ENCODE measurements at regions of chr6 and their contacts with region 1.

Region 1: DNA sequence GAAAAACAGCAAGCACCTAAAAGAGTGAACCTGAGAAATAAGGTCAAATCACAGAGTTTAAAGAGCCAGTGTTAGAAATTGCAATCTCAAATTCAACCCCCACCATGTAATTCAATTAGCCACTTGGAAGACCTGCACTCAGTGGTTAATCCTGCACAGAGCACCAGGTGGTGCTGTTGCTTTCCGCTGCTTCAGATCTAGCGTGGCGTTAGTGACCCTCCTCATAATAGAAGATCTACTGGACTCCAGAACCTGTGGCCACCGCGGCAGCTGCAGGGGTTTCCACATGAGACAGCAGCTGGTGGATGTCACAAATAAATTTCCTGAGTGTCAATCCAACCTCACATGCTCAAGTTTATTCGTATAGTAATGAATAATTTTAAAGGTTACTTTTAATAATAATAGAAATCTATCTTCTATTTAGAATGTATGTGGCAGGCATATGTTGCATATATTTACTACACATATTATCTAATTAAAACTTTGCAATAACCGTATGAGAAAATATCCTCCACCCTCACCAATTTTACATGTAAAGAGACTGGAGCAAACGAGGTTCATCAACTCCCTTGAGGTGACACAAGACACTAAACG is 84.4 kb downstream of the SYNE1 start:
- DNase-seq: peak; percentile 68 to 73
- H3K4me3 ChIP-seq: no peak overlapping the region
- H3K4me3 Mint-ChIP-seq: no peak overlapping the region
- H3K27ac Mint-ChIP-seq: no peak overlapping the region
- H3K4me1 ChIP-seq: no peaks in the 10 kb centered on the region
- H3K4me1 Mint-ChIP-seq: no peaks in the 10 kb centered on the region
- H3K27me3 ChIP-seq: no peaks in the 10 kb centered on the region
- H3K27me3 Mint-ChIP-seq: peaks cover 2% of the 10 kb centered on the region
- CTCF ChIP-seq: peak; percentile 88 to 89

Region 2: DNA sequence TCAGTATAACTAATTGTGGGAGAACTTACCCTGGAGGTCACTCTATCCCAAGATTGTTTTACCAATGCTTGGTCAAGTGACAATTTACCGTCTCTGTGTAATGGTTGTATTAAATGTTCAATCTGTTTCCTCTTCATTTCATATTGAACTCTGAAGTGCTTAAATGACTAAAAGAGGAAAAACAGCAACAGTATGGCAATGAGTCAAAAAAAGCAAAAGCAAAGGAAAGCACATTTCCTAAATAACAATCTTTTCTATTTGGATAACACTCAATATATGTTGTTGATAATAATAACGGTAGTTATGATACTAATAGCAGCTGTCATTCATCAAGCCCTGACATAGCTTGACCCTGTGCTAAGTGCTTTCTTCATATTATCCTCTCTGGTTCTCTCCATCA is 67.9 kb before region 1 on chr6:
- CTCF ChIA-PET with region 1: no interaction called
- POLR2A ChIA-PET with region 1: no interaction called
- intact Hi-C with region 1: loop called (anchors 1 kb)
- DNase-seq: no peak
- H3K4me3 ChIP-seq: no peak overlapping the region
- H3K4me3 Mint-ChIP-seq: no peak overlapping the region
- H3K27ac Mint-ChIP-seq: no peak overlapping the region
- H3K4me1 ChIP-seq: no peaks in the 10 kb centered on the region
- H3K4me1 Mint-ChIP-seq: no peaks in the 10 kb centered on the region
- H3K27me3 ChIP-seq: no peaks in the 10 kb centered on the region
- H3K27me3 Mint-ChIP-seq: peaks cover 4% of the 10 kb centered on the region
- CTCF ChIP-seq: no peak

Region 3: DNA sequence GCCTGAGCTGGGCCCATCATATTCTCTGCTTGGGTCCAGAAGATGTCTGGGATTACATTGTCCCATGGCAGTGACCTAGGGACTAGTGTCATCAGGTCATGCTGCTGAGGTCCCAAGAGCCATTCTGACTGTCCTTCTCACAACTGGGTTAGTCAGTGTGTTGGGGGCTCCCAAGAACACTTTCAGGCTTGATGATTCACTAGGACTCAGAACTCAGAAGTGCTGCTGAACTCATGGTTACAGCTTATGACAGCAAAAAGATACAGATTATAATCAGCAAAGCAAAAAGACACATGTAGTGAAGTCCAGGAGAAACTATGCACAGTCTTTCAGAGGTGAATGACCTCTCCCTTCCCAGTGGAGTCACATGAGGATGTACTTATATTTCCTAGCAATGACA is 23.3 kb before region 1 on chr6:
- CTCF ChIA-PET with region 1: no interaction called
- POLR2A ChIA-PET with region 1: no interaction called
- intact Hi-C with region 1: no loop called
- DNase-seq: no peak
- H3K4me3 ChIP-seq: no peak overlapping the region
- H3K4me3 Mint-ChIP-seq: no peak overlapping the region
- H3K27ac Mint-ChIP-seq: no peak overlapping the region
- H3K4me1 ChIP-seq: no peaks in the 10 kb centered on the region
- H3K4me1 Mint-ChIP-seq: no peaks in the 10 kb centered on the region
- H3K27me3 ChIP-seq: no peaks in the 10 kb centered on the region
- H3K27me3 Mint-ChIP-seq: peaks cover 10% of the 10 kb centered on the region
- CTCF ChIP-seq: no peak

Region 4: GRCh38 chr6:152585236-152585635 is 32.5 kb after region 1 on chr6:
- CTCF ChIA-PET with region 1: no interaction called
- POLR2A ChIA-PET with region 1: no interaction called
- intact Hi-C with region 1: no loop called
- DNase-seq: no peak
- H3K4me3 ChIP-seq: no peak overlapping the region
- H3K4me3 Mint-ChIP-seq: no peak overlapping the region
- H3K27ac Mint-ChIP-seq: no peak overlapping the region
- H3K4me1 ChIP-seq: no peaks in the 10 kb centered on the region
- H3K4me1 Mint-ChIP-seq: no peaks in the 10 kb centered on the region
- H3K27me3 ChIP-seq: no peaks in the 10 kb centered on the region
- H3K27me3 Mint-ChIP-seq: no peaks in the 10 kb centered on the region
- CTCF ChIP-seq: no peak

Region 5: DNA sequence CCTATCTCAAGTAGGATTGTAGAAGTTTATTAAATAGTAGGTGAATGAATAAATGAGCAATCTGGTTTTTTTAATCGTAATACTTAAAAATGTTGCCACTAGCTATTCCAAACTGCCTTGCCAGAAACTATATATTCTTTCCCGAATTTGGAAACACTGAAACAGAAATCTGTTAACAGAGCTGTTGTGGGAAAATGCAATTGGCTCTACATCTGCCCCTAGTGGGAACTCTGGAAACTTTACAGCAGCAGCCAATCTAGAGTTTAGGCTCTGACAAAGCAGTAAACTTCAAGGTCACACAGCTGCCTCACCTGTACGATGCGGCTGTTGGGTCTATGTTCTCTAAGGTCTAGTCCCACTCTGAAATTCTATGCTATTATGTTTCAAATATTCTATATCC is 42.8 kb after region 1 on chr6:
- CTCF ChIA-PET with region 1: no interaction called
- POLR2A ChIA-PET with region 1: no interaction called
- intact Hi-C with region 1: loop called (anchors 1 kb)
- DNase-seq: peak in 1 of 2 experiments; percentile 25
- H3K4me3 ChIP-seq: no peak overlapping the region
- H3K4me3 Mint-ChIP-seq: peak overlapping the region; percentile 61
- H3K27ac Mint-ChIP-seq: peak overlapping the region; percentile 97
- H3K4me1 ChIP-seq: peaks cover 46% of the 10 kb centered on the region
- H3K4me1 Mint-ChIP-seq: peaks cover 31% of the 10 kb centered on the region
- H3K27me3 ChIP-seq: no peaks in the 10 kb centered on the region
- H3K27me3 Mint-ChIP-seq: no peaks in the 10 kb centered on the region
- CTCF ChIP-seq: peak; percentile 43 to 45

Region 6: DNA sequence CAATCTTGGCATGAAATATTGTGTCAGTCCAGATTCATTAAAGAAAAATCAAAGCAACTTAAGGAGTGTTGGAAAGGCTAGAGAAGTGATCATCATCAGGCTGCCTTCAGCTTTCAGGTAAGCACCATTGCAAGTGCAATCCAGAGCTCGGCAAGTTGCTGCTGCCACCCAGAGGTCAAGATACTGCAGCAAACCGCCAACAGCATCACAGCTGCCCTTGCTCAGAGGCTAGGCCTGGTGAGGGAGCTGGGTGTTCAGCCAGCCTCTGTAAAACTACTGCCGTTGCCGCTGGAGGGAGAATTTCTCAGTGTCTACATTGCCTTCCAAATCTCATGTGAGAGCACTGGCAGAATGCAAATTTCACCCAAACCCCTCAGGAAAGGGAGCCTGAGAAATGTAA is 90.3 kb after region 1 on chr6:
- CTCF ChIA-PET with region 1: interaction called, 14 read pairs
- POLR2A ChIA-PET with region 1: no interaction called
- intact Hi-C with region 1: loop called (anchors 1 kb)
- DNase-seq: peak; percentile 75 to 78
- H3K4me3 ChIP-seq: no peak overlapping the region
- H3K4me3 Mint-ChIP-seq: no peak overlapping the region
- H3K27ac Mint-ChIP-seq: no peak overlapping the region
- H3K4me1 ChIP-seq: no peaks in the 10 kb centered on the region
- H3K4me1 Mint-ChIP-seq: no peaks in the 10 kb centered on the region
- H3K27me3 ChIP-seq: no peaks in the 10 kb centered on the region
- H3K27me3 Mint-ChIP-seq: peaks cover 27% of the 10 kb centered on the region
- CTCF ChIP-seq: peak; percentile 55 to 79

Region 7: GRCh38 chr6:152669895-152670294 is 117.2 kb after region 1 on chr6:
- CTCF ChIA-PET with region 1: no interaction called
- POLR2A ChIA-PET with region 1: no interaction called
- intact Hi-C with region 1: loop called (anchors 1 kb)
- DNase-seq: peak in 1 of 2 experiments; percentile 5
- H3K4me3 ChIP-seq: no peak overlapping the region
- H3K4me3 Mint-ChIP-seq: no peak overlapping the region
- H3K27ac Mint-ChIP-seq: no peak overlapping the region
- H3K4me1 ChIP-seq: no peaks in the 10 kb centered on the region
- H3K4me1 Mint-ChIP-seq: no peaks in the 10 kb centered on the region
- H3K27me3 ChIP-seq: no peaks in the 10 kb centered on the region
- H3K27me3 Mint-ChIP-seq: peaks cover 13% of the 10 kb centered on the region
- CTCF ChIP-seq: peak in 1 of 2 experiments; percentile 36

Region 8: DNA sequence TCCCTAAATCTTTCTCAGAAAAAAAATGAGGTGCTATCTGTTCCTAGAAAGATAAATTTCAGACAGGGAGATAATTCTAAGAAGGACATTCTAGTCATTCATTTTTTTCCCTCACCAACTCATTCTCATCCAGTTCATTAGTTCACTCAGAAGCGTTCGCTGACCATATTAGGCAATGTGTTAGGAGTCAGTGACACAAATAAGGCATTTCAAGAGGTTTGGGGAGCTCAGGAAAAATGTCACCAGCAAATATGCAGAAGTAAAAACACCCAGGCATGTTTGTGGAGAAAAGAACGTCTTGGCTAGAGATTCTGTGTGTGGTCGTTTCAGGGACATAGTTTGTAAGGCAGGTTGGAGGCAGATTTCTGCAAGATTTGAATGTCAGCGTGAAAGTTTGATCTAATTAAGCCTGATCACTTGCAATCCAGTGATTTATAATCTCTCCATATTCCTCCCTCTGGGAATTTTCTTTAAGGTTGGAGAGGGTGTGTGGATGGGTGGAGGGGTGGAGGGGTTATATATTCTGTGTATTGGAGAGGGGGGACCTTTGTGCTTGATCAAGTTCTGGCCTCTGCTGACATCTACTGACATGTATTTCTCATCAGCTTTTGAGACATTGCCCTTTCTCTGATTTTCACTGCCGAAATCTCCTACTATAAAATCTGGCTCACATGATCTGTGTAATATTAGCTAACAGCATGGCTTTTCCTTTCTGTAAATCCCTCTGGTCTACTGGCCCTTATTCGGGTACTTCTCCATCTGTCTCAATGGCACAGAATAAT is 148.6 kb after region 1 on chr6:
- CTCF ChIA-PET with region 1: no interaction called
- POLR2A ChIA-PET with region 1: no interaction called
- intact Hi-C with region 1: loop called (anchors 1 kb)
- DNase-seq: no peak
- H3K4me3 ChIP-seq: no peak overlapping the region
- H3K4me3 Mint-ChIP-seq: no peak overlapping the region
- H3K27ac Mint-ChIP-seq: no peak overlapping the region
- H3K4me1 ChIP-seq: no peaks in the 10 kb centered on the region
- H3K4me1 Mint-ChIP-seq: no peaks in the 10 kb centered on the region
- H3K27me3 ChIP-seq: no peaks in the 10 kb centered on the region
- H3K27me3 Mint-ChIP-seq: peaks cover 7% of the 10 kb centered on the region
- CTCF ChIP-seq: no peak

Region 9: GRCh38 chr6:152948150-152948768 is 395.5 kb after region 1 on chr6:
- CTCF ChIA-PET with region 1: no interaction called
- POLR2A ChIA-PET with region 1: no interaction called
- intact Hi-C with region 1: loop called (anchors 1 kb)
- DNase-seq: peak in 1 of 2 experiments; percentile 17
- H3K4me3 ChIP-seq: no peak overlapping the region
- H3K4me3 Mint-ChIP-seq: no peak overlapping the region
- H3K27ac Mint-ChIP-seq: no peak overlapping the region
- H3K4me1 ChIP-seq: no peaks in the 10 kb centered on the region
- H3K4me1 Mint-ChIP-seq: no peaks in the 10 kb centered on the region
- H3K27me3 ChIP-seq: no peaks in the 10 kb centered on the region
- H3K27me3 Mint-ChIP-seq: peaks cover 7% of the 10 kb centered on the region
- CTCF ChIP-seq: peak; percentile 46 to 63

Region 10: DNA sequence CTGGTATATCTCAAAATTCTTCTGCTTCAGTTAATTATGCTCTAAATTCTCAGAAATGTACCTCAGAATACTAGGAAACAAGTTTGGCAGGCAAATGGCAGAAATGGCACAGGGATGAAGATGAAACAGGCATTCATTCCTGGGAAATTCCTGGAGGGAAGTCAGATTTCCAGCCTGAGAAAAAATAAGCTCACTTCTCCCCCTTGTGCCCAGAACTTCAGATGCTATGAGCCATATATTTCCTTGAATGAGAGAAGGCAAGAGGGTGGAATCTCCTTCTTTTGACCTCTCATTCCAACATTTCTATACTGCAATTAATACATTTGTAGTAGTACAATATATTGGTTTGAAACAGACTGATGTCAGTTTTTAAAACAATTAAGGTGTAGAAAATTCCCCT is 555.6 kb after region 1 on chr6:
- CTCF ChIA-PET with region 1: no interaction called
- POLR2A ChIA-PET with region 1: no interaction called
- intact Hi-C with region 1: no loop called
- DNase-seq: peak in 1 of 2 experiments; percentile 12
- H3K4me3 ChIP-seq: no peak overlapping the region
- H3K4me3 Mint-ChIP-seq: no peak overlapping the region
- H3K27ac Mint-ChIP-seq: no peak overlapping the region
- H3K4me1 ChIP-seq: no peaks in the 10 kb centered on the region
- H3K4me1 Mint-ChIP-seq: no peaks in the 10 kb centered on the region
- H3K27me3 ChIP-seq: no peaks in the 10 kb centered on the region
- H3K27me3 Mint-ChIP-seq: peaks cover 19% of the 10 kb centered on the region
- CTCF ChIP-seq: peak in 1 of 2 experiments; percentile 41